ENCODE measurements at regions of chr12 and their contacts with region 1.

Region 1: GRCh38 chr12:53267999-53268647 is at the start of gene ESPL1:
- DNase-seq: peak; percentile 63 to 73
- H3K4me3 ChIP-seq: peak within 1 kb of the TSS; percentile 85
- H3K27ac ChIP-seq: no peak within 1 kb of the TSS
- H3K4me1 ChIP-seq: peaks cover 11% of the 10 kb centered on the region
- H3K27me3 ChIP-seq: no peaks in the 10 kb centered on the region
- CTCF ChIP-seq: no peak; the same call in 1 of the 2 replicates
- total RNA-seq, gene ESPL1: 37.4 and 42.0 TPM in 2 replicates

Region 2: GRCh38 chr12:54025499-54026405 is 757.6 kb after region 1 on chr12:
- CTCF ChIA-PET with region 1: no interaction called
- POLR2A ChIA-PET with region 1: interaction called, 56 read pairs
- intact Hi-C with region 1: no loop called
- DNase-seq: no peak
- H3K4me3 ChIP-seq: no peak overlapping the region
- H3K27ac ChIP-seq: no peak overlapping the region
- H3K4me1 ChIP-seq: no peaks in the 10 kb centered on the region
- H3K27me3 ChIP-seq: no peaks in the 10 kb centered on the region
- CTCF ChIP-seq: no peak